Gastrocnemius medialis (tissue), 4 donors: ENCODE measurements at regions of chr7 and their contacts with region 1.

Region 1: GRCh38 chr7:139620676-139621344 is 97.3 kb downstream of the CLEC2L start:
- DNase-seq: peak in 1 of 2 donors; percentile 32
- ATAC-seq: peak; percentile 54 to 81
- H3K4me3 ChIP-seq: no peak overlapping the region
- H3K27ac ChIP-seq: no peak overlapping the region
- H3K4me1 ChIP-seq: no peaks in the 10 kb centered on the region
- H3K27me3 ChIP-seq: no peaks in the 10 kb centered on the region
- CTCF ChIP-seq: peak; percentile 55 to 76 (median 70)
- POLR2A ChIP-seq: no peak

Region 2: DNA sequence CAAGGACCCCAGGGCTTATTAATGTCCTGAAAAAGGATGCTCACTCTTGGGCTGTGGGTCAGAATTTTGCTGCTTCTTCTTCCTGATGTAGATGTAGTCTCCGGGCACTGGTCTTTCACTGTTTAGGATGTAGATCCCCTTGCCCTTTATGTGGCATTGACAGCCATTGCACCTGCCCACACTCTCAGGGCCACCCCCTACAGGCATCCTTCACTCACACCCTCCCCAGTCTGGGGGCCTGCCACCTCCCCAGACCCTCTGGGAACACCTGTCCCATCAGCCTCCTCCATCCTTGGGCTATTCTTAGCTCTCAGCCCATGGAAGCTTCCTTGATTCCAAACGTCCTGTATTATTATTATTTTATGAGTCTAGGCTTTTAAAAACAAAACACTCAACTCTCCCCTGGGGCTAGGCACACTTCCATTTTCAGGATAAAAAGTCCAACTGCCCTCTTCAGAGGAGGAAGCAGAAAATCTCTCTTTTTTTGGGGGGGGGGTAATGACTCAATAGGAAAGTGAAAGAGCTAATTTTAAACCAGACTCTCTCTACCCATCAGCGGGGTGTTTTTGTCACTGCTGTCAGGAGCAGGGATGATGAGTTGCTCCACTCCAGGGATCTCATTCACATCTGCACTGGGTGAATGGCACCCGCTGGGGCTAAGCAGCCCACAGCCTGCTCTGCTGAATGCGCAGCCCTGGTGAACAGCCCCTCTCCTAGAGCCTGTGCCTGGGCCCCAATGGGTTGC is 125.8 kb before region 1 on chr7:
- in situ Hi-C with region 1: loop called in 2 of 4 experiments (anchors 10 kb)
- intact Hi-C with region 1: loop called (anchors 1 kb)
- DNase-seq: no peak
- ATAC-seq: no peak
- H3K4me3 ChIP-seq: no peak overlapping the region
- H3K27ac ChIP-seq: no peak overlapping the region
- H3K4me1 ChIP-seq: no peaks in the 10 kb centered on the region
- H3K27me3 ChIP-seq: no peaks in the 10 kb centered on the region
- CTCF ChIP-seq: no peak
- POLR2A ChIP-seq: no peak

Region 3: DNA sequence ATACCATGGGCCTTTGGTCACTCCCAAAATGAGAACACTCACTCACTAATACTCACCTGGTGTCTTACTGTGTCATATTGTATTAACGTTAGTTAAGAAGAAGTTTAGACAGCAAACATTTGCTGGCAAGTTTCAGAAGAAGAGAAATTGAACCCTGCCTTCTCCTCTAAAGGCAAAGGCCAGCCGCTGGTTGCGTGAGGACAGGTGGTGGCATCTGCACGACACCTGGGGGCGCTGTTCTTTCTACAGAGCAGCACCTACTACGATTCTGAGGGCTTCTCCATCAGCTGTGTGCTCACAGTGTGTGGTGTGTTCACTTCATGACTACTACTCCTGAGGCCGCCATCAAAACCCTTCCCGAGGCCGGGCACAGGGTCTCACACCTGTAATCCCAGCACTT is 115.2 kb before region 1 on chr7:
- in situ Hi-C with region 1: loop called in 1 of 4 experiments (anchors 10 kb)
- intact Hi-C with region 1: loop called (anchors 1 kb)
- DNase-seq: no peak
- ATAC-seq: no peak
- H3K4me3 ChIP-seq: no peak overlapping the region
- H3K27ac ChIP-seq: no peak overlapping the region
- H3K4me1 ChIP-seq: no peaks in the 10 kb centered on the region
- H3K27me3 ChIP-seq: no peaks in the 10 kb centered on the region
- CTCF ChIP-seq: no peak
- POLR2A ChIP-seq: no peak

Region 4: GRCh38 chr7:139570119-139570518 is 50.7 kb before region 1 on chr7:
- in situ Hi-C with region 1: no loop called
- intact Hi-C with region 1: no loop called
- DNase-seq: no peak
- ATAC-seq: no peak
- H3K4me3 ChIP-seq: no peak overlapping the region
- H3K27ac ChIP-seq: peak overlapping the region in 3 of 4 donors; percentile 3 to 38 (median 7)
- H3K4me1 ChIP-seq: peaks cover 16 to 19% of the 10 kb centered on the region in 2 donors
- H3K27me3 ChIP-seq: no peaks in the 10 kb centered on the region
- CTCF ChIP-seq: peak in 2 of 5 experiments; percentile 11 to 30
- POLR2A ChIP-seq: no peak

Region 5: DNA sequence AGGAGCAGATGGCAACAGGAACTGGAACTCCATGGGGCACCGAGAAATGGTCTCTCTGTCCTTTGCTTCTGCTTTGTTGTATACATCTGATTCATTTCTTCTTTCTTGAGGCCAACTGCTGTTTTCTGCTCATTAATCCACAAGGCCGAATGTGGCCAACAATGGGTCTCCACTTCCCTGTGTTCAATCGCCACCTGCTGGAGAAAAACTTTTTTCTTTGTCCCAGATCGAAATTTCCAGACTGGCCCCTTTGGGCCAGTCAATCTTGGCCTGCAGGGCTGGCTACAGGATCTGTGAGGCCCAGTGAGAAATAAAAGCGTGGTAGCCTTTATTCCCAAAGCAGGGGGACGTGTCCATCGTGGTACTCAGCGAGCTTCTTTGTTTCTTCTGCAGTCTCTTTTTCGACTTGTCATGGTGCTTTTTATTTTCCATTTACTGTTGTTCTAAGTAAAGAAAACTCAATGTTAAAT is 383.1 kb after region 1 on chr7:
- in situ Hi-C with region 1: no loop called
- intact Hi-C with region 1: loop called (anchors 10 kb)
- DNase-seq: no peak
- ATAC-seq: no peak
- H3K4me3 ChIP-seq: no peak overlapping the region
- H3K27ac ChIP-seq: no peak overlapping the region
- H3K4me1 ChIP-seq: no peaks in the 10 kb centered on the region
- H3K27me3 ChIP-seq: no peaks in the 10 kb centered on the region
- CTCF ChIP-seq: peak in 4 of 5 experiments; percentile 16 to 42 (median 26)
- POLR2A ChIP-seq: no peak